Ovary (tissue), 10 donors: ENCODE measurements at regions of chr5 and their contacts with region 1.

Region 1: DNA sequence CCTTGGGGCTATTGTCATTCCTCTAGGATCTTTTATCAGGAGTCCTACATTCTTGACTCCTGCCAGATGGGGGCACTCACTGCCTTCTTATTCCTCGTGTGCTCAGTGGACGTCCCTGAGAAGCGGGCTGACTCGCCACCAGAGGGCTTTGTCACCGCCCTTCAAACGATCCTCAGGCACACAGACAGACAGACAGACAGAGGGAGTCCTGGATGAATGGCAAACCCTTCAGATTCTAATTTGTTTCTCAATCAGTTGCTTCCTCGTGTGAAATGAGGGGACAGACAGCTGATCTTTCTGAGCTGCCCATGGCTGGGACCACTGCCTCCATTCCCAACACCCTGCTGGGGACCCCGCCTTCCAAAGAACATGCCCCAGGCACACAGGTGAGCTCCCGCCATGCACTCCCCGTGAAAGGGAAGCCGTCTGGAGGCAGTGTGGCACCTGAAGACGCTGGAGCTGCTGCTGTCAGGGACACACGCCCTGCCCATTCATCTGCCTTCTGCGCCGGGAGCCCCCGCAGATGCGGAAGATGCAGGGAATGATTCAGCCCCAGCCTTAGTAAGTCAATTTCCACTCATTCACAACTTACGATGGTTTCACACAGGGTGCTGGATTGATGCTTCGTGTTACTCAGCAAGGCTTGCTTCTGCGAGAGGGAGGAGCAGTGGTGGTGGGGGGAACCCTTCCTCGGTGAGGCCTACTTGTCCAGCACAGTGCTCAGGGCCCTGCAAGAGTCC is 24.9 kb upstream of the SH3PXD2B start:
- DNase-seq: peak; percentile 81 to 89 (median 86)
- H3K4me3 ChIP-seq: no peak overlapping the region
- H3K27ac ChIP-seq: no peak overlapping the region
- H3K4me1 ChIP-seq: no peaks in the 10 kb centered on the region
- H3K27me3 ChIP-seq: no peaks in the 10 kb centered on the region
- CTCF ChIP-seq: peak; percentile 53 to 99 (median 98)
- EP300 ChIP-seq: no peak
- POLR2A ChIP-seq: peak; percentile 54

Region 2: GRCh38 chr5:172640822-172641358 is 161.7 kb after region 1 on chr5 and contains the start of gene NEURL1B:
- intact Hi-C with region 1: loop called in 3 of 4 experiments (anchors 5 to 10 kb)
- DNase-seq: peak; percentile 82 to 89 (median 87)
- H3K4me3 ChIP-seq: peak within 1 kb of the TSS; percentile 73
- H3K27ac ChIP-seq: peak within 1 kb of the TSS; percentile 38 to 89
- H3K4me1 ChIP-seq: peaks cover 4% of the 10 kb centered on the region
- H3K27me3 ChIP-seq: no peaks in the 10 kb centered on the region
- CTCF ChIP-seq: peak in 1 of 3 donors; percentile 19
- EP300 ChIP-seq: no peak
- POLR2A ChIP-seq: peak; percentile 44
- total RNA-seq, gene NEURL1B: 15.0 to 75.1 (median 36.3) TPM

Region 3: DNA sequence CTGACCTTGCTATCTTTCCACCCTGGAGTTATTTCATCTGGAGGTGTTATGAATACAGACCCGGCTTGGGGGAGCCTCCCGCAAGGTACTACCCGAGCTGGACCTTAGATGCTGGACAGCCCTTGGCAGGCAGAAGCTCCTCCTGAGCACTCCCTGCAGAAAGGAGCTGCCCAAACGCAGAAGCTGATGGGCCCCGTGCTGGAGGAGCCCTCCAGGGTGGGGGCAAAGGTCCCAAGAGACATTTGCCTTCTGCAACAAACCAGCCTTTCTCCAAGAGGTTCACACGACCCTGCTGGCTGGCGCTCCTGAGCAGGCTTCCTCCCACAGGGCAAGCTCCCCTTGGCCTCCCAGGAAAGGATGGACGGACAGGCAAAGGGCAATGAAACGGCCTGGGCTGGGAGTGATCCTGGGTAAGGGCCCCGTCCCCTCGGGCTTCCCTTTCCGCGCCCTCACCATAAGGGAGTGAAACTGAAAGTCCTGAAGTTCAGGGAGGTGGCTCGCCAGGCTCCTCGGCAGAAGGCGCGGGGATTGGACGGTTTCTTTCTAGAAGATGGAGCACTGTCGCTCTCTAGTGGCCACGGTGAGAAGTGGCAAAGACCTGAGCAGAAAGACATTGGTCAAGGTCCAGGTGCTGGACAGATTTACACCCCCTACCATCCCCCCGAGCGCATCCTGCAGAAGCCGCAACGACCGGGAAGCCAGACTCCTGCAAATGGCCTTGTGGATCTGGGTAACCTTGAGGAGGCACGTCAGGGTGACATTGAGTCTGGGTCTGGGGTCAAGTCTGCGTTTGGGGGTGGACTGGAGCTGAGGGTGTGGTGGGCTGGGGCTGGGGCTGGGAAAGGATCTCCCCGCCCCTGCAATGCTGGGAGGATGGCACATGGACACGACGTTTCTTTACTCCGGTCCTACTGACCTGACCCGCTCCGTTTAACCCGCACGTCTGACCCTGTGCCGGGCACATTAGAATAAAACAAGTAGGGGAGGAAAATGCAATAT is 218.2 kb after region 1 on chr5:
- intact Hi-C with region 1: loop called (anchors 1 to 5 kb)
- DNase-seq: peak; percentile 88 to 94 (median 91)
- H3K4me3 ChIP-seq: peak overlapping the region; percentile 48
- H3K27ac ChIP-seq: peak overlapping the region; percentile 5 to 61
- H3K4me1 ChIP-seq: peaks cover 28% of the 10 kb centered on the region
- H3K27me3 ChIP-seq: no peaks in the 10 kb centered on the region
- CTCF ChIP-seq: peak; percentile 83 to 94 (median 94)
- EP300 ChIP-seq: no peak
- POLR2A ChIP-seq: peak; percentile 40

Region 4: GRCh38 chr5:172932313-172933017 is 453.3 kb after region 1 on chr5:
- intact Hi-C with region 1: loop called in 2 of 4 experiments (anchors 10 kb)
- DNase-seq: peak; percentile 62 to 84 (median 77)
- H3K4me3 ChIP-seq: no peak overlapping the region
- H3K27ac ChIP-seq: no peak overlapping the region
- H3K4me1 ChIP-seq: peaks cover 2% of the 10 kb centered on the region
- H3K27me3 ChIP-seq: no peaks in the 10 kb centered on the region
- CTCF ChIP-seq: peak; percentile 79 to 98 (median 97)
- EP300 ChIP-seq: no peak
- POLR2A ChIP-seq: peak; percentile 36

Region 5: GRCh38 chr5:172943283-172943841 is 464.1 kb after region 1 on chr5:
- intact Hi-C with region 1: loop called in 3 of 4 experiments (anchors 5 to 10 kb)
- DNase-seq: peak; percentile 32 to 62 (median 51)
- H3K4me3 ChIP-seq: no peak overlapping the region
- H3K27ac ChIP-seq: no peak overlapping the region
- H3K4me1 ChIP-seq: no peaks in the 10 kb centered on the region
- H3K27me3 ChIP-seq: no peaks in the 10 kb centered on the region
- CTCF ChIP-seq: no peak
- EP300 ChIP-seq: no peak
- POLR2A ChIP-seq: no peak